Caco-2 (cell line): ENCODE measurements at regions of chr4 and their contacts with region 1.

Region 1: DNA sequence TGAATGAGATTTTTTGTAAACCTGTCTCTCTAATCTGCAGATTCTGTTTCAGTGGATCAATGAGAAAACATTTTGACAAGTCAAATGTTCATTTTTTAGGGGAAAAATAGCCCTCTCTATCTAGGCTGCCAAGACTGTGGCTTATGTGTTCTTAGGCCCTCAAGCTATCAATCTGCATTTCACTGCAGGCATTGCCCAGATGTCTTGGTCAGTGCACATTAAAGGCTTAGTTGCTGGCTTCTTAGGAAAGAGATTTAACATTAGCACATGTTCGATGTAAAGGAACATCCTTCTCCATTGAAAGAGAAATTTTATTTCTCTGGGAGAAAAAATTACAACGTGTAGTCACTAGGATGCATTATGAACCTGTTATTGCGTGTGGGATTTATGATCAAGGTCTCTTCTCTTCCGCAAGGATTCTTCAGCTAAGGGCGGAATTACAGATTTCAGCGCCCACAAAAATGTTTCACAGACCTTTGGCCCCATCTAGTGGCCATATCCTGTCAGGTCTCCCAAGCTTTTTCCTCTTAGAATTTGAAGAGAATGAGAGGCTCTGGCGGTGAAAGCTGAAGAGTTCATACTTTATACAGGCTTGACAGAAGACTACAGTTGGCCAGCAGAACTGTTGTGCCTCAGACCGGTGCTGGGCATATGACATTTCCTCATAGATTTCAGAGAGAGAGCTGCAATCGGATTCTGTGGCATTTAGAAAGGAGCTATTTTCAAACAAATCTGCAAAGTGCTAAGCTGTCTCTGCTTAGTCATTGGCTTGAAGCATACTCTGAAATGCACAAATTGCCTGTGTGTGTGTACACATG is 144.6 kb upstream of the NOCT start:
- DNase-seq: peak; percentile 62 to 78
- H3K4me3 ChIP-seq: no peak overlapping the region
- H3K4me3 Mint-ChIP-seq: no peak overlapping the region
- H3K27ac Mint-ChIP-seq: no peak overlapping the region
- H3K4me1 ChIP-seq: peaks cover 11% of the 10 kb centered on the region
- H3K4me1 Mint-ChIP-seq: peaks cover 7% of the 10 kb centered on the region
- H3K27me3 ChIP-seq: no peaks in the 10 kb centered on the region
- H3K27me3 Mint-ChIP-seq: no peaks in the 10 kb centered on the region
- CTCF ChIP-seq: peak; percentile 70 to 80

Region 2: DNA sequence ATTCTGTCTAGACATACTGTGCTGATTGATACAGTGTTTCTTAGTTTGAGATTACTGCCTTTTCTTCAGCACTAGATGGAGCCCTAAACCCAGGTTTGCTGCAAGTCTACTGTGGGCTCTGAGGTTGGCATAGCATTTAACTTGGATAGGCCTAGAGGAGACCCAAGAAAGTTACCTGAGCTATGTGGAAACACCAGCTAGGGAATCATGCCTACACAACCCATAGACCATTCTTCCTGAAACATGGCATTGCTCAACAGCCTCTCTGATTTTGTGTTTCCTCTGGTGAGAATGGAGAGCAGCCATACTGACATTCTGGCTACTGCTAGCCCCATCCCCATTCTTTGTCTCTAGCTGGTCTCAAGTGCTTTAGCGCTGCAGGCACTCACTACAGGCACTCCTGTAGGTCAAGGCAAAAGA is 1051.0 kb before region 1 on chr4:
- CTCF ChIA-PET with region 1: no interaction called
- POLR2A ChIA-PET with region 1: no interaction called
- intact Hi-C with region 1: loop called (anchors 1 kb)
- DNase-seq: peak; percentile 46 to 58
- H3K4me3 ChIP-seq: no peak overlapping the region
- H3K4me3 Mint-ChIP-seq: no peak overlapping the region
- H3K27ac Mint-ChIP-seq: no peak overlapping the region
- H3K4me1 ChIP-seq: no peaks in the 10 kb centered on the region
- H3K4me1 Mint-ChIP-seq: no peaks in the 10 kb centered on the region
- H3K27me3 ChIP-seq: no peaks in the 10 kb centered on the region
- H3K27me3 Mint-ChIP-seq: no peaks in the 10 kb centered on the region
- CTCF ChIP-seq: peak; percentile 64 to 76

Region 3: GRCh38 chr4:138090150-138090917 is 780.6 kb before region 1 on chr4:
- CTCF ChIA-PET with region 1: no interaction called
- POLR2A ChIA-PET with region 1: no interaction called
- intact Hi-C with region 1: loop called (anchors 10 kb)
- DNase-seq: peak; percentile 59 to 79
- H3K4me3 ChIP-seq: no peak overlapping the region; the same call in 1 of the 2 replicates
- H3K4me3 Mint-ChIP-seq: peak overlapping the region; percentile 69
- H3K27ac Mint-ChIP-seq: no peak overlapping the region
- H3K4me1 ChIP-seq: peaks cover 10% of the 10 kb centered on the region; the same call in 1 of the 2 replicates
- H3K4me1 Mint-ChIP-seq: peaks cover 21% of the 10 kb centered on the region
- H3K27me3 ChIP-seq: no peaks in the 10 kb centered on the region
- H3K27me3 Mint-ChIP-seq: no peaks in the 10 kb centered on the region
- CTCF ChIP-seq: peak; percentile 55 to 71

Region 4: GRCh38 chr4:138494931-138495330 is 376.0 kb before region 1 on chr4:
- CTCF ChIA-PET with region 1: no interaction called
- POLR2A ChIA-PET with region 1: no interaction called
- intact Hi-C with region 1: loop called (anchors 5 kb)
- DNase-seq: peak in 1 of 2 experiments; percentile 19
- H3K4me3 ChIP-seq: no peak overlapping the region
- H3K4me3 Mint-ChIP-seq: no peak overlapping the region
- H3K27ac Mint-ChIP-seq: no peak overlapping the region
- H3K4me1 ChIP-seq: no peaks in the 10 kb centered on the region
- H3K4me1 Mint-ChIP-seq: no peaks in the 10 kb centered on the region
- H3K27me3 ChIP-seq: no peaks in the 10 kb centered on the region
- H3K27me3 Mint-ChIP-seq: peaks cover 5% of the 10 kb centered on the region
- CTCF ChIP-seq: no peak

Region 5: DNA sequence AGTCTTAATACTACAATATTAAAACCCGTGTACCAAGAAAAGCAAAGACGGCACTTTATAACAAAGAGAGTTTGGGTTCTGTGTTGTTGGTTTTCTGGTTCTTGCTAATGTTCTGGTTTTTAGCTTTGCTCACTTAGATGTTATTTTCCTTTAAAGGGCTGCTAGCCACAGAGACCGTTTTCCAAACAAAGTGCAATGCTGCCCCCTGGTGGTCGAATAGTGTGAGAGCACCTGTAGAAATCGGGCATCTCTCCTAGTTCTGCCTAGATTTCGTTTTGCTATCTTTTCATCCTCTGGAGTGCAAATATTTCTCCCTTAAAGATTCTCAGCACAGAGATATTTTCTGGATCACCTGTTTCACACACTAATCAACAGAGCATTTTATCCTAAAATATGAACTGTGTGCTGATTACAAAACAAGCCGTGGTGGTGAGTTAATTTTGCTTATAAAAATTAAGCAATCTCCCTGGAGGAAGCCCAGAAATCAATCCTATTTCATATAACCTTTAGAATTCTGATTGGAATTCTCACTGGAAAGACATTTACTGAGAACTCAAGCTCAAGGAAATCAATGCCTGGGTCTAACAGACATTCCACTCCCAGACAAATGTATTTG is 189.8 kb before region 1 on chr4:
- CTCF ChIA-PET with region 1: interaction called, 5 read pairs
- POLR2A ChIA-PET with region 1: no interaction called
- intact Hi-C with region 1: loop called (anchors 1 kb)
- DNase-seq: peak; percentile 63 to 79
- H3K4me3 ChIP-seq: no peak overlapping the region
- H3K4me3 Mint-ChIP-seq: no peak overlapping the region
- H3K27ac Mint-ChIP-seq: no peak overlapping the region
- H3K4me1 ChIP-seq: peaks cover 10% of the 10 kb centered on the region
- H3K4me1 Mint-ChIP-seq: peaks cover 11% of the 10 kb centered on the region
- H3K27me3 ChIP-seq: no peaks in the 10 kb centered on the region
- H3K27me3 Mint-ChIP-seq: no peaks in the 10 kb centered on the region
- CTCF ChIP-seq: peak; percentile 72 to 89

Region 6: GRCh38 chr4:138804711-138805110 is 66.2 kb before region 1 on chr4:
- CTCF ChIA-PET with region 1: no interaction called
- POLR2A ChIA-PET with region 1: no interaction called
- intact Hi-C with region 1: loop called (anchors 1 kb)
- DNase-seq: peak; percentile 81 to 89
- H3K4me3 ChIP-seq: peak overlapping the region; percentile 17
- H3K4me3 Mint-ChIP-seq: peak overlapping the region; percentile 65
- H3K27ac Mint-ChIP-seq: peak overlapping the region; percentile 84
- H3K4me1 ChIP-seq: peaks cover 31% of the 10 kb centered on the region
- H3K4me1 Mint-ChIP-seq: peaks cover 34% of the 10 kb centered on the region
- H3K27me3 ChIP-seq: no peaks in the 10 kb centered on the region
- H3K27me3 Mint-ChIP-seq: no peaks in the 10 kb centered on the region
- CTCF ChIP-seq: no peak

Region 7: DNA sequence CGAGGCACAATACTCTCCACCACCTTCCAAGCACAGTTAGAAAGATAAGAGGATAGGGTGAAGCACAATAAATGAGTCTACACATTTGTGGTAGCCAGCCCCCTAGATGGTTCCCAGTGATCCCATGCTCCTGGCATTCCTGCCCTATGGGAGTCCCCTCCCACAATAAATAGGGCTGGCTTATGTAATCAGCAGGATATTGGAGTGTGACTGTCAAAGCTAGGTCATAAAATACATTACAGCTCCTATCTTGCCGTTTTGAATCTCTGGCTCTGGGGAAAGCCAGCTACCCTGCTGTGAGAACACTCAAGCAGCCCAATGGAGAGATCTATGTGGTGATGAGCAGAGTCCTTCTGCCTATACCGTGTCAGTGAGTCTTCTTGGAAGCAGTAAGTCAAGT is 54.1 kb before region 1 on chr4:
- CTCF ChIA-PET with region 1: no interaction called
- POLR2A ChIA-PET with region 1: no interaction called
- intact Hi-C with region 1: no loop called
- DNase-seq: no peak
- H3K4me3 ChIP-seq: no peak overlapping the region
- H3K4me3 Mint-ChIP-seq: no peak overlapping the region
- H3K27ac Mint-ChIP-seq: no peak overlapping the region
- H3K4me1 ChIP-seq: no peaks in the 10 kb centered on the region
- H3K4me1 Mint-ChIP-seq: peaks cover 7% of the 10 kb centered on the region
- H3K27me3 ChIP-seq: no peaks in the 10 kb centered on the region
- H3K27me3 Mint-ChIP-seq: no peaks in the 10 kb centered on the region
- CTCF ChIP-seq: no peak

Region 8: GRCh38 chr4:138907174-138907573 is 36.2 kb after region 1 on chr4:
- CTCF ChIA-PET with region 1: no interaction called
- POLR2A ChIA-PET with region 1: no interaction called
- intact Hi-C with region 1: no loop called
- DNase-seq: no peak
- H3K4me3 ChIP-seq: no peak overlapping the region
- H3K4me3 Mint-ChIP-seq: no peak overlapping the region
- H3K27ac Mint-ChIP-seq: no peak overlapping the region
- H3K4me1 ChIP-seq: peaks cover 9% of the 10 kb centered on the region
- H3K4me1 Mint-ChIP-seq: peaks cover 15% of the 10 kb centered on the region
- H3K27me3 ChIP-seq: no peaks in the 10 kb centered on the region
- H3K27me3 Mint-ChIP-seq: no peaks in the 10 kb centered on the region
- CTCF ChIP-seq: no peak

Region 9: GRCh38 chr4:138919094-138919936 is 48.4 kb after region 1 on chr4:
- CTCF ChIA-PET with region 1: no interaction called
- POLR2A ChIA-PET with region 1: no interaction called
- intact Hi-C with region 1: loop called (anchors 1 kb)
- DNase-seq: peak; percentile 72 to 78
- H3K4me3 ChIP-seq: no peak overlapping the region
- H3K4me3 Mint-ChIP-seq: peak overlapping the region; percentile 42
- H3K27ac Mint-ChIP-seq: no peak overlapping the region
- H3K4me1 ChIP-seq: no peaks in the 10 kb centered on the region
- H3K4me1 Mint-ChIP-seq: peaks cover 10% of the 10 kb centered on the region
- H3K27me3 ChIP-seq: no peaks in the 10 kb centered on the region
- H3K27me3 Mint-ChIP-seq: no peaks in the 10 kb centered on the region
- CTCF ChIP-seq: peak; percentile 65 to 77